Activated CD8-positive, alpha-beta T cell treated with anti-CD3 and anti-CD28 coated beads for 36 hours (primary cell): ENCODE measurements at regions of chr7 and their contacts with region 1.

Region 1: DNA sequence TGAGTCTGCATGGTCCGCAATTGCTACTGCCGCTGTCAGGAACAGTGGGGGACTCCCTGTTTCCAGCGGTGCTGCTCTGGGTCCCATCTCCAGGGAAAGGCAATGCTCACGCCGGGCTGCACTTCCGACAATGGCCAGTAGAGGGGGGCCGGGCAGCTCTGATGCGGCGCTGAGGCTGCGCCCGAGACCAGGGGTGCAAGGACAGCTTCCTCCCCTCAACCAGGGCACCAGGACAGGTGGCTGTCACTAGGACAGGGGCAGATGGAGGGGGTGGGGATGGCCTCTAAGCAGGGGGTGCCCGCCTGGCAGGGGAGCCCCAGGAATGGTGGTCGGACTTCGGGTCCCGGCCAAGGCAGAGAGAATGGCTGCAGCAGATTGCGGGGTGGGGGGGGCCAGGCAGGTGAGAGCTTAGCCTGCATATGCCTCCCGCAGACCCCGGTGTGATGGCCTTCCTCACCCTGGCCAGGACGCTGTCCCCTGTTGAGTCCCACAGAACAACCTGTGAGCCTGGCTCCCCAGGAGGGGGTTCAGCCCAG is 71.0 kb upstream of the KCTD7 start:
- DNase-seq: peak; percentile 75
- ATAC-seq: peak; percentile 97
- H3K4me3 Mint-ChIP-seq: no peak overlapping the region
- H3K27ac Mint-ChIP-seq: no peak overlapping the region
- H3K4me1 Mint-ChIP-seq: peaks cover 2% of the 10 kb centered on the region
- H3K27me3 Mint-ChIP-seq: no peaks in the 10 kb centered on the region
- CTCF ChIP-seq: peak; percentile 93

Region 2: DNA sequence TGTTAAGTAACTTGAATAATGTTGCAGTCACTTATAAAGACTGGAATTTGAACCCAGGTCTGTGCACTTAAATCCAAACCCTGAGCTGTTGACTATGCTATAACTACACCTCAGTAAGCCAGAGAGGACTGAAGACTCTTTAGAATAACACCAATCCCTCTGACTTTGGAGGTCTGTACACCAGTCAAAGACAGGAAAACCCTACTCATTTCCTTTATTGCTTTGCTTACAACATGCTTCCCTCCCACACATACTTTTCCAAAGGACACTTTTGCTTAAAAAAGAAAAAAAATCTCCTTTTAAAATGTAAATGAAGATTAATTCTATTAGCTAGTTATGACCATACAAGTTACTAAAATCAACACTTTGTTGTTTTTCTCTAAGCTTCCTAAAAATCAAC is 113.7 kb before region 1 on chr7:
- CTCF ChIA-PET with region 1: no interaction called
- POLR2A ChIA-PET with region 1: no interaction called
- intact Hi-C with region 1: no loop called
- DNase-seq: no peak
- ATAC-seq: no peak
- H3K4me3 Mint-ChIP-seq: no peak overlapping the region
- H3K27ac Mint-ChIP-seq: no peak overlapping the region
- H3K4me1 Mint-ChIP-seq: peaks cover 7% of the 10 kb centered on the region
- H3K27me3 Mint-ChIP-seq: no peaks in the 10 kb centered on the region
- CTCF ChIP-seq: no peak

Region 3: DNA sequence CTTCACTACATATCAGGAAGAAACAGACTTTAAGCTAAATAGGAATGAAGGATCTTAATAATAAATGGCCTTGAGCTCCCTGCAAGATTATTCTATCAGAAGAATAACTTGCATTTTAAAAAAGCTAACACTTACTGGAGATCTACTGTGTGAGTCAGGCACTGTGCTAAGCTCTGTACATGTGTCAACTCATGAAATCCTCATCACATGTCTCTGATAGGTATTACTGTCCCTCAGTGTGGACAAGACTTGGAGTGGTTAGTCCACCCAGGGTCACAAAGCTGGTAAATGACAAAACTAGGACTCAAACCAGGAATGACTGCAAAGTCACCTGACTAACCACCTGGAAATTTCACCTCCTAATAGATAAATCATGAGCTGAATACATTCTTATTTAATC is 13.9 kb after region 1 on chr7:
- CTCF ChIA-PET with region 1: interaction called, 10 read pairs
- POLR2A ChIA-PET with region 1: no interaction called
- intact Hi-C with region 1: no loop called
- DNase-seq: no peak
- ATAC-seq: no peak
- H3K4me3 Mint-ChIP-seq: no peak overlapping the region
- H3K27ac Mint-ChIP-seq: no peak overlapping the region
- H3K4me1 Mint-ChIP-seq: peaks cover 32% of the 10 kb centered on the region
- H3K27me3 Mint-ChIP-seq: no peaks in the 10 kb centered on the region
- CTCF ChIP-seq: no peak

Region 4: GRCh38 chr7:66583490-66584110 is 25.9 kb after region 1 on chr7:
- CTCF ChIA-PET with region 1: no interaction called
- POLR2A ChIA-PET with region 1: no interaction called
- intact Hi-C with region 1: no loop called
- DNase-seq: peak; percentile 24
- ATAC-seq: peak; percentile 72
- H3K4me3 Mint-ChIP-seq: no peak overlapping the region
- H3K27ac Mint-ChIP-seq: peak overlapping the region; percentile 31
- H3K4me1 Mint-ChIP-seq: peaks cover 54% of the 10 kb centered on the region
- H3K27me3 Mint-ChIP-seq: no peaks in the 10 kb centered on the region
- CTCF ChIP-seq: no peak